ENCODE measurements at regions of chr22 and their contacts with region 1.

Region 1: GRCh38 chr22:28771195-28771791 is 1.2 kb upstream of the CCDC117 start:
- DNase-seq: no peak
- H3K4me3 ChIP-seq: no peak overlapping the region
- H3K27ac ChIP-seq: no peak overlapping the region
- H3K4me1 ChIP-seq: 0 out of 2 replicates have a peak, but pooled peaks cover 8% of the 10 kb centered on the region
- H3K27me3 ChIP-seq: no peaks in the 10 kb centered on the region
- CTCF ChIP-seq: no peak

Region 2: DNA sequence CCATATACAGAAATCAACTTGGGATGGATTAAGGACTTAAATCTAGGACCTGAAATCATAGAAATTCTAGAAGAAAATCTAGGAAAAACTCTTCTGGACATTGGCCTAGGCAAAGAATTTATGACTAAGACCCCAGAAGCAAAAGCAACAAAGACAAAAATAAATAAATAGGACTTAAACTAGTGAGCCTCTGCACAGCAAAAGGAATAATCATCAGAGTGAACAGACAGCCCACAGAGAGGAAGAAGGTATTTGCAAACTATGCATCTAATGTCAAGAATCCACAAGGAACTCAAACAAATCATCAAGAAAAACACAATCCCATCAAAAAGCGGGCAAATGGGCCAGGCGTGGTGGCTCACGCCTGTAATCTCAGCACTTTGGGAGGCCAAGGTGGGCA is 124.1 kb before region 1 on chr22:
- CTCF ChIA-PET with region 1: no interaction called
- POLR2A ChIA-PET with region 1: no interaction called
- intact Hi-C with region 1: no loop called
- DNase-seq: no peak
- H3K4me3 ChIP-seq: no peak overlapping the region
- H3K27ac ChIP-seq: no peak overlapping the region
- H3K4me1 ChIP-seq: no peaks in the 10 kb centered on the region
- H3K27me3 ChIP-seq: no peaks in the 10 kb centered on the region; the same call in 1 of the 2 replicates
- CTCF ChIP-seq: no peak

Region 3: GRCh38 chr22:28808716-28809355 is 37.5 kb after region 1 on chr22:
- CTCF ChIA-PET with region 1: no interaction called
- POLR2A ChIA-PET with region 1: interaction called, 10 read pairs
- intact Hi-C with region 1: no loop called
- DNase-seq: no peak
- H3K4me3 ChIP-seq: no peak overlapping the region
- H3K27ac ChIP-seq: no peak overlapping the region
- H3K4me1 ChIP-seq: peaks cover 4% of the 10 kb centered on the region; the same call in 1 of the 2 replicates
- H3K27me3 ChIP-seq: no peaks in the 10 kb centered on the region
- CTCF ChIP-seq: no peak

Region 4: DNA sequence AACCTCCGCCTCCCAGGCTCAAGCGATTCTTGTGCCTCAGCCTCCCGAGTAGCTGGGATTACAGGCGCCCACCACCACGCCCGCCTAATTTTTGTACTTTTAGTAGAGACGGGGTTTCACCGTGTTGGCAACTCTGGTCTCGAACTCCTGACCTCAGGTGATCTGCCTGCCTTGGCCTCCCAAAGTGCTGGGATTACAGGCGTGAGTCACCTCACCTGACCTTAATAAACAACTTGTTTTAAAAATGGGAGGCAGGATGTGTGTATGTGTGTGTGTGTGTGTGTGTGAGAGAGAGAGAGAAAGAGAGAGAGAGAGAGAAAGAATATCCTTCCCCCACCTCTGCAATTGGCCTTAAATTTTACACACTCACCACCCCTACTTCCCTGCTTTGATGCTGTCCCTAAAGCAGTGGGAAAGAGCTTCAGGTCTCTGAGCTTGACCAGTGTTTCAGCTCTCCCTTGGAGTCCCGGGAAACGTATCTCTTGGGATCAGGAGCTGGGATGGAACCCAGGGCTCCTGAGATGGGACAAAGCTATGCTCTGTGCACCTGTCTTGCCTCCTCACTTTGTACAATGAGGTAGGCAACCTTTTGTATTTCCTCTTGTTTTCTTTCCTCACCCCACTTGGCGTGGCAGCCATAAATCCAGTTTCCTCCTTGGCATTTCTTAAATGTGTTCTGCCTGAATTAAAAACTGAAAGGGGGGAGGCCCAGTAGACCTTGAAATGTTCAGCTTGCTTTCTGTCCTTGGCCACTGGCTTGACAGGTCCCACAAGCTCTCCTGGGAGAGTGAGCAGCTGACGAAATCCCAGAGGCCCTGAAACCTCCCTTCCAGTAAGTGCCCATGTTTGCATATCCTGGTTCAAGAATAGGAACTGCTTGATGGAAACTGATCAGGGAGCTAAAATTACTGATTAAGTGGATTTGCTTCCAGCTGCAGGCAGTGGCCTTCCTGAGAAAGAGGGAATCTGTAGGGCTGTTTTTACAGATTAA is 46.9 kb after region 1 on chr22:
- CTCF ChIA-PET with region 1: interaction called, 11 read pairs
- POLR2A ChIA-PET with region 1: no interaction called
- intact Hi-C with region 1: no loop called
- DNase-seq: peak; percentile 63 to 94
- H3K4me3 ChIP-seq: peak overlapping the region; percentile 15; the same call in 1 of the 2 replicates
- H3K27ac ChIP-seq: peak overlapping the region; percentile 93
- H3K4me1 ChIP-seq: peaks cover 65% of the 10 kb centered on the region
- H3K27me3 ChIP-seq: no peaks in the 10 kb centered on the region
- CTCF ChIP-seq: no peak

Region 5: GRCh38 chr22:29040385-29041275 is 269.3 kb after region 1 on chr22:
- CTCF ChIA-PET with region 1: no interaction called
- POLR2A ChIA-PET with region 1: no interaction called
- intact Hi-C with region 1: no loop called
- DNase-seq: peak; percentile 44 to 70
- H3K4me3 ChIP-seq: no peak overlapping the region
- H3K27ac ChIP-seq: no peak overlapping the region
- H3K4me1 ChIP-seq: peaks cover 22% of the 10 kb centered on the region
- H3K27me3 ChIP-seq: no peaks in the 10 kb centered on the region
- CTCF ChIP-seq: peak; percentile 98

Measured in PC-9 (cell line).